K562 (cell line): ENCODE measurements at regions of chr1 and their contacts with region 1.

Region 1: GRCh38 chr1:155609515-155610256 is at the start of gene MSTO1:
- DNase-seq: peak; percentile 85 to 98 (median 91)
- ATAC-seq: peak; percentile 99
- H3K4me3 ChIP-seq: peak within 1 kb of the TSS; percentile 45
- H3K27ac ChIP-seq: peak within 1 kb of the TSS; percentile 86
- H3K4me1 ChIP-seq: peaks cover 0 to 13% of the 10 kb centered on the region in 2 experiments; a peak in 2 of 5 replicates
- H3K27me3 ChIP-seq: no peaks in the 10 kb centered on the region
- CTCF ChIP-seq: no peak
- EP300 ChIP-seq: no peak
- POLR2A ChIP-seq: peak; percentile 88
- RAD21 ChIP-seq: no peak
- polyA plus RNA-seq, gene MSTO1: 18.8 to 21.6 TPM

Region 2: GRCh38 chr1:155389826-155390225 is 219.9 kb before region 1 on chr1:
- CTCF ChIA-PET with region 1: no interaction called
- POLR2A ChIA-PET with region 1: no interaction called
- in situ Hi-C with region 1: no loop called
- intact Hi-C with region 1: no loop called
- DNase-seq: peak in 2 of 4 experiments; percentile 31 to 37
- ATAC-seq: no peak
- H3K4me3 ChIP-seq: no peak overlapping the region
- H3K27ac ChIP-seq: no peak overlapping the region
- H3K4me1 ChIP-seq: no peaks in the 10 kb centered on the region
- H3K27me3 ChIP-seq: no peaks in the 10 kb centered on the region
- CTCF ChIP-seq: no peak
- EP300 ChIP-seq: no peak
- POLR2A ChIP-seq: no peak
- RAD21 ChIP-seq: no peak

Region 3: GRCh38 chr1:155648551-155649147 is 39.0 kb after region 1 on chr1:
- CTCF ChIA-PET with region 1: no interaction called
- POLR2A ChIA-PET with region 1: no interaction called
- in situ Hi-C with region 1: no loop called
- intact Hi-C with region 1: loop called (anchors 5 kb)
- DNase-seq: peak in 1 of 4 experiments; percentile 52
- ATAC-seq: peak; percentile 86
- H3K4me3 ChIP-seq: no peak overlapping the region
- H3K27ac ChIP-seq: no peak overlapping the region
- H3K4me1 ChIP-seq: no peaks in the 10 kb centered on the region; a peak in 2 of 5 replicates
- H3K27me3 ChIP-seq: peaks cover 0 to 2% of the 10 kb centered on the region in 2 experiments; a peak in 1 of 5 replicates
- CTCF ChIP-seq: peak; percentile 41 to 60 (median 43); a peak in 3 of 6 replicates
- EP300 ChIP-seq: no peak
- POLR2A ChIP-seq: no peak
- RAD21 ChIP-seq: peak; percentile 32 to 52; a peak in 3 of 4 replicates

Region 4: DNA sequence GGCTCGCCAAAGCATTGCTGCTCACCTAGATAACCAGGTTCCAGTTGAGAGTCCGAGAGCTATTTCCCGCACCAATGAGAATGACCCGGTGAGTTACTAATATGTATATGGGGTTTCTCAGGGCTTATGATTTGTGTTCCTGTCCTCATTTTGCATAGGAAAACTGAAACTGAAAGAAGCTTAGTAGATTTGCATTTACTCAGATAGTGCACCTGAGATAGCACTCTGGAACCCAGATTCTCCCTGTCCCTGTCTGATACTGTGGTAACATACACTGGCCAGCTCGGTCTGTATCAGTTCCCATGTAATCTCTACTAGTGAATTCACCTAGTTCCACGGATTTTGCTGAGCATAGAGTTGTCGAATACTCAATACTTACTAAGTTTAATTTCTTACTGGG is 107.4 kb after region 1 on chr1:
- CTCF ChIA-PET with region 1: no interaction called
- POLR2A ChIA-PET with region 1: no interaction called
- in situ Hi-C with region 1: no loop called
- intact Hi-C with region 1: no loop called
- DNase-seq: no peak
- ATAC-seq: no peak
- H3K4me3 ChIP-seq: no peak overlapping the region
- H3K27ac ChIP-seq: no peak overlapping the region
- H3K4me1 ChIP-seq: no peaks in the 10 kb centered on the region
- H3K27me3 ChIP-seq: no peaks in the 10 kb centered on the region
- CTCF ChIP-seq: no peak
- EP300 ChIP-seq: no peak
- POLR2A ChIP-seq: no peak
- RAD21 ChIP-seq: no peak

Region 5: GRCh38 chr1:155744711-155745283 is 135.1 kb after region 1 on chr1:
- CTCF ChIA-PET with region 1: no interaction called
- POLR2A ChIA-PET with region 1: no interaction called
- in situ Hi-C with region 1: loop called (anchors 5 kb)
- intact Hi-C with region 1: no loop called
- DNase-seq: no peak
- ATAC-seq: no peak
- H3K4me3 ChIP-seq: peak overlapping the region; percentile 41
- H3K27ac ChIP-seq: peak overlapping the region; percentile 77
- H3K4me1 ChIP-seq: no peaks in the 10 kb centered on the region; a peak in 1 of 5 replicates
- H3K27me3 ChIP-seq: no peaks in the 10 kb centered on the region
- CTCF ChIP-seq: no peak
- EP300 ChIP-seq: no peak
- POLR2A ChIP-seq: no peak
- RAD21 ChIP-seq: no peak

Region 6: DNA sequence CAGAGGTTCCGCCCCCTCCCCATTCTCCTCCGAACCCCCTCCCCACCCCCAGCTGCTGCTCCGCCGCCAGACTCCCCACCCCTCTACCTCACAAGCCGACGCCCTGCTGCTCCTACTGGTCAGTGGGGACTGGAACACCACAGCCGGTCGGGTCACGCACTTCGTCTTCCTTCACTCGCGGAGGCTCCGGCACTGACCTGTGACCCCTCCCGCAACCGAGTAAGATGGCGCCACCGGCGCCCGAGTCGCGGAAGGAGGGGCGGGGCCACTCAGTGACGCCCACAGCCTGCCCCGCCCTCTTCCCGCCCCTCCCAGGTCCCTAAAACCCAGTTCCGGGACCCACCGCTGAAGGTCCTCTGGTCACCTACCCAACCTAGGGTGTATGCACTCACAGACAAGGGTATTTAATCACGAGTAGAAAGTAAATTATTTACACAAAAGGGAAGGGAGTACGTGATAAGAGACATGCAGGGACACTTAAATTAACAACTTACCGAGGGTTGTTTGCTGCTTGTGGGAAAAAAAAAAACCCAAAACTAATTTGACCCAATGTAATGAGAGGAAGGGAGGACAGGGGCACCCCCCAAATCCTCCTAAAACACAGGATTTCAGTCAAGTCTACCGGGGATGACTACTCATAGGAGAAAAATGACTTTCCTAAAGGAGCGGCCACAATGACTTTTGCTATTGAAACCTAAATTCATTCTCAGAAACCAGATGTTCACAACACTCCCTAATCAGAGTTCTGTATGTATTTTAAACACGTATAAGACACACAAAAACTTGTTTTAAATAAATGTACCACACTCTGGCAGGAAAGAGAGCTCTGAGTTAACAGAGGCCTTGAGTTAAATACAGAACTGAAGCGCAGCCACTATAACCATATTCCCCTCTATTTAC is 301.7 kb after region 1 on chr1 and contains the start of gene RIT1:
- CTCF ChIA-PET with region 1: no interaction called
- POLR2A ChIA-PET with region 1: no interaction called
- in situ Hi-C with region 1: no loop called
- intact Hi-C with region 1: no loop called
- DNase-seq: peak; percentile 91 to 95 (median 94)
- ATAC-seq: peak; percentile 95
- H3K4me3 ChIP-seq: peak within 1 kb of the TSS; percentile 48
- H3K27ac ChIP-seq: peak within 1 kb of the TSS; percentile 73
- H3K4me1 ChIP-seq: peaks cover 3 to 7% of the 10 kb centered on the region in 2 experiments; a peak in 2 of 5 replicates
- H3K27me3 ChIP-seq: no peaks in the 10 kb centered on the region
- CTCF ChIP-seq: peak in 1 of 3 experiments; percentile 12; a peak in 1 of 6 replicates
- EP300 ChIP-seq: no peak
- POLR2A ChIP-seq: peak; percentile 50; the same call in 1 of the 2 replicates
- RAD21 ChIP-seq: no peak
- polyA plus RNA-seq, gene RIT1: 53.7 to 57.1 TPM